Activated T-helper 2 cell treated with anti-CD3 and anti-CD28 coated beads, Interferon-gamma antibody, Interleukin-2, Interleukin-4, amounts not matched to agents 10 μg/mL and 5 μg/mL and 100 μg/mL, durations not matched to agents 14 hours and 24 hours and 36 hours (primary cell): ENCODE measurements at regions of chr20 and their contacts with region 1.

Region 1: GRCh38 chr20:51695574-51696303 is 72.5 kb downstream of the ATP9A start:
- DNase-seq: no peak
- H3K4me3 Mint-ChIP-seq: peak overlapping the region; percentile 56
- H3K27ac Mint-ChIP-seq: peak overlapping the region; percentile 72
- H3K4me1 Mint-ChIP-seq: peaks cover 21% of the 10 kb centered on the region
- H3K27me3 Mint-ChIP-seq: peaks cover 8% of the 10 kb centered on the region

Region 2: DNA sequence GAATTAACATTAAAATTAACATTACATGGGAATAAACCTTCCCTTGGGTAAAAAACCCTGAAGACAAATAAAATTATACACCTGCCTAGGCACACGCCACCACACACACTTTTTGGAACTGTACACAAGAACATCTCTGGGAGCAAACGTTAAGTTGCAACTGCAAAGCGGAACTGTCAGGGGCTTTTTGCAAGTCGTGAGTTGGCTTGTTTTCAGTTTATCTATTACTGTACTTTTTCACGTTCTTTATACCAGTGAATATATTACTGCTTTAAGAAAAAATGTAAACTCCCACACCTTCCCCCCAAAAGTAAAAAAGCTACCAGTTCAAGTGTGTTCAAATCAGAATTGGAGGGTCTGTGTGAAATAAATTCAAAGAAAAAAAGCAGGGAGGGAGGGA is 87.7 kb before region 1 on chr20:
- intact Hi-C with region 1: no loop called
- DNase-seq: no peak
- H3K4me3 Mint-ChIP-seq: no peak overlapping the region
- H3K27ac Mint-ChIP-seq: no peak overlapping the region
- H3K4me1 Mint-ChIP-seq: peaks cover 23% of the 10 kb centered on the region
- H3K27me3 Mint-ChIP-seq: peaks cover under 1% of the 10 kb centered on the region

Region 3: DNA sequence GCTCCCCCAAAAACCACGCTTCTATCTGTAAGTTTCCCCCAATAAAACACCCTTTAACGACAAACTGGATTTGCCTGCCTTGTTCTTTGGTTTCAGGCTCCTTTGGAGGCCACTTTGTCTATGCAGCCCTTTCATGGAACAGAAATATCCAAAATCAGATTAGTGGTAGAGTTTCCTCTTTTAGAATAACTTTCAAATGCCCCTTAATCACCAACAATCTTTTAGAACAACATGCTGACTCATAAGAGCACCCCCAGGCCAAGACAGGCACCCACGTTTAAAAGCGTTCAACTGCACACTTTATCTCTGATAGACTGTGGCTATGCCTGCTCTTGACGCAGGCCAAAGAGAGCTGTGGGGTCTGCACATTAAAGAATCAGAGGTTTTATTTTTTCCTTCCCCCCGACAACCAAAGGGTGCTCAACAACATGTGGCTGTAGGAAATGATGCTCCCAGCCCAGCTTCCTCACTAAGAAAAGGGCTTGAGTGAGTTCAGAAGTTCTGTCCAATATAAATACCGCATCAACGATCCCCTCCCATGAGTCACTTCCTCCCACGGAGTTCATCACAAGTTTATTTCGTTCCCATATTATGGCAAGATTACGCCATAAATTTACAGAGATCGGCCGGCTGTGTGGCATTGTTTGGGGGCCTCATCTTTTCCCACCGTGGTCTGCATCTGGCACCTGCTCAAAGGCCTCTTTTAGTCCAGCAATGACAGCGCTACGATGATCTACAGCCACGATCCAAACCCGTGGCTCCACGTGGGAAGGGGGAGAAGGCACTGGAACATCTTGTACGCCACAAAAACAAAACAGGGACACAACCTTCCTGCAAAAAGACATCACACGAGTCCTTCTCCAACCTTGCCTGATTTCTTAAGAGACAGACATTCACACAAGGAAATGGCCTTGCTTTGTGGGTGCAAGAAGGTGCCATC is 64.5 kb before region 1 on chr20:
- intact Hi-C with region 1: loop called (anchors 5 kb)
- DNase-seq: peak; percentile 35
- H3K4me3 Mint-ChIP-seq: peak overlapping the region; percentile 18
- H3K27ac Mint-ChIP-seq: peak overlapping the region; percentile 82
- H3K4me1 Mint-ChIP-seq: peaks cover 58% of the 10 kb centered on the region
- H3K27me3 Mint-ChIP-seq: peaks cover 13% of the 10 kb centered on the region

Region 4: GRCh38 chr20:51661609-51662178 is 34.0 kb before region 1 on chr20:
- intact Hi-C with region 1: loop called (anchors 5 kb)
- DNase-seq: peak; percentile 32
- H3K4me3 Mint-ChIP-seq: no peak overlapping the region
- H3K27ac Mint-ChIP-seq: peak overlapping the region; percentile 20
- H3K4me1 Mint-ChIP-seq: peaks cover 23% of the 10 kb centered on the region
- H3K27me3 Mint-ChIP-seq: peaks cover 4% of the 10 kb centered on the region

Region 5: GRCh38 chr20:51767010-51767558 is 71.3 kb after region 1 on chr20:
- intact Hi-C with region 1: loop called (anchors 5 kb)
- DNase-seq: peak; percentile 44
- H3K4me3 Mint-ChIP-seq: peak overlapping the region; percentile 65
- H3K27ac Mint-ChIP-seq: no peak overlapping the region
- H3K4me1 Mint-ChIP-seq: peaks cover 7% of the 10 kb centered on the region
- H3K27me3 Mint-ChIP-seq: peaks cover 32% of the 10 kb centered on the region

Region 6: GRCh38 chr20:51914758-51915157 is 219.0 kb after region 1 on chr20:
- intact Hi-C with region 1: no loop called
- DNase-seq: no peak
- H3K4me3 Mint-ChIP-seq: no peak overlapping the region
- H3K27ac Mint-ChIP-seq: no peak overlapping the region
- H3K4me1 Mint-ChIP-seq: no peaks in the 10 kb centered on the region
- H3K27me3 Mint-ChIP-seq: peaks cover 8% of the 10 kb centered on the region

Region 7: GRCh38 chr20:51995551-51995951 is 299.8 kb after region 1 on chr20:
- intact Hi-C with region 1: no loop called
- DNase-seq: no peak
- H3K4me3 Mint-ChIP-seq: no peak overlapping the region
- H3K27ac Mint-ChIP-seq: no peak overlapping the region
- H3K4me1 Mint-ChIP-seq: no peaks in the 10 kb centered on the region
- H3K27me3 Mint-ChIP-seq: peaks cover 3% of the 10 kb centered on the region